ENCODE measurements at regions of chr2 and their contacts with region 1.

Region 1: DNA sequence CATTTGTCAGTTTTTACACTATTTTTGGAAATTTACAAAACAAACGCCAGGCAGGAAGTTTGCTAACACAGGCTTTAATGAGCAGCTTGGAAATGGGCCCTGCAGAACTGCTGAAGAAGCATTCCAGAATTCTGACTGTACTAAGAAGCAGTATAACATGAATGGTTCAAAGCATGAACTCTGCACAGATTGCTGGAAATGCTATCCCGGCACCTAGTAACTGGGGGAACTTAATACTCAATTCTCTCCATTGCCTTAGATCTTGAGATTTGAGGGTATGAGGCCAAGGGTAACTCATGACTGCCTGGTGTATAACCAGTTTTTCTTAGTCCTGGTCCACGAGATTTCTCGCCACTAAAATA is 439.1 kb upstream of the MAP2 start:
- DNase-seq: no peak

Region 2: DNA sequence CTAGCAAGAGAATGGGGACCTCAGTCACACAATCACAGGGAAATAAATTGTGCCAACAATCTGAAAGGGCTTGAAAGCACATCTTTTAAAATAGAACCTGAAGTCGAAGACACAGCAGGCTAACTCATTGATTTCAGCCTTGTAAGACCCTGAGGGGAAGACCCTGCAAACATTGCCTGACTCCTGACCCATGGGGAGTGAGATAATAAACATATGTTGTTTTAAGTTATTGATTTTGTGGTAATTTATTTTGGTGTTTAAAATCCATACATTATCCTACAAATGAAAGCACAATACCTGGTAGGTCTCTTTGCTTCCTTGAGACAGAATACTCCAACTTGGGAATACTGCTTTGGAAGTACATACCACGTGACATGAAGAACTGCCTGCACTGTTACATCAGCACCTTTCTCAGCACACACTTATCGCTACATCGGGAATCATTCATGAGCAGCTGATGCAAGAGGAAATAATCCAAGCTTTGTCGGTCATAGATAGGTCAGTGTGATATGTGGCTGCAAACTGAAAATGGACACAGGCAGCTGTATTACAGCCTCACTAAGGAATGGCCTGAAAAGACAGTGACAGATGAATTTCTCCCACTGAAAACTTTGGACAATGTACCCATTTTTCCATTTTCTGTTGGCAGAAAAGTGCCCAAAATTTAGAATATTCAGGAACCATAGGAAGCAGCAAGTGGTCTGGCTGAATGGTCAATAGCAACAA is 55.4 kb before region 1 on chr2:
- intact Hi-C with region 1: loop called in 1 of 2 experiments (anchors 2 kb)
- DNase-seq: no peak

Region 3: DNA sequence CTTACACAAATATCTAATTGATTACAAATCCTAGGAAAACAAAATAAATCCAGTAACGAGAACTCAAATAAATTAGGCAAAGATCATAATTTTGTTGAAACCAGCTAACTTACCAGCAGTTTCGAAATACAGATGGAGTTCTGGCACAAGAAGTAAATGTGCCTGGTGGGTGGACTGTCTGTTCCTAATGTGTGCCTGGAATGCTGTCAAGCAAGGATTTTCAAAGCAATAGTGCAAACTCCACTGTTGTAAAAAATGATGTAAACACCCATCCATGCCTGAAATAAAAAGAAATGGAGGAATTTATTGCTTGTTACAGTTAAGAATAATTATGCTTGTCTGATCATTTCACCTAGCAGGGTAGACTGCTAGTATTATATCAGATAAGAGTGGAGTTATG is 15.2 kb after region 1 on chr2:
- intact Hi-C with region 1: no loop called
- DNase-seq: no peak

Region 4: GRCh38 chr2:209113026-209113425 is 128.3 kb after region 1 on chr2:
- intact Hi-C with region 1: no loop called
- DNase-seq: no peak